ENCODE measurements at regions of chr7 and their contacts with region 1.

Region 1: GRCh38 chr7:101507791-101508252 is 121.3 kb downstream of the MYL10 start:
- DNase-seq: peak; percentile 70 to 84
- ATAC-seq: peak; percentile 76 to 84; a peak in 5 of 6 replicates
- H3K4me3 ChIP-seq: no peak overlapping the region
- H3K27ac ChIP-seq: no peak overlapping the region
- H3K4me1 ChIP-seq: no peaks in the 10 kb centered on the region
- CTCF ChIP-seq: peak; percentile 99
- EP300 ChIP-seq: no peak
- POLR2A ChIP-seq: no peak
- RAD21 ChIP-seq: peak; percentile 90 to 95

Region 2: DNA sequence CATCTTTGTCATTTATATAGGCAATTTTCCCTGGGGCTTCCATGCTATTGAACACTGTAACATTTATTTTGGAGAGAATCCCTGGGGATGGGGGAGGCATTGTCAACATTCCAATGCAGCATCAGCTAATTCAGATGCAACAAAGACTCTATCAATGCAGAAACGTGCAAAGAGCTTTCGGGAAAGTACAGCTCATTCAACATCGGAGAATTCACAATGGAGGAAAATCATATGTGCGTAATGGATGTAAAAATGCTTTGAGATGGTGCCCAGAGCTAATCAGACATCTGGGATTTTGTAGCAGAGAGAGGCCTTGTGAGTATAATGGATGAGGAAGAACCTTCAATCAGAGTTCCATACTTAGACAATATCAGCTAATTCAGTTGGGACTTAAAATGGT is 234.6 kb before region 1 on chr7:
- CTCF ChIA-PET with region 1: no interaction called
- POLR2A ChIA-PET with region 1: no interaction called
- DNase-seq: no peak
- ATAC-seq: no peak
- H3K4me3 ChIP-seq: no peak overlapping the region
- H3K27ac ChIP-seq: no peak overlapping the region
- H3K4me1 ChIP-seq: no peaks in the 10 kb centered on the region
- CTCF ChIP-seq: no peak
- EP300 ChIP-seq: no peak
- POLR2A ChIP-seq: no peak
- RAD21 ChIP-seq: no peak

Region 3: DNA sequence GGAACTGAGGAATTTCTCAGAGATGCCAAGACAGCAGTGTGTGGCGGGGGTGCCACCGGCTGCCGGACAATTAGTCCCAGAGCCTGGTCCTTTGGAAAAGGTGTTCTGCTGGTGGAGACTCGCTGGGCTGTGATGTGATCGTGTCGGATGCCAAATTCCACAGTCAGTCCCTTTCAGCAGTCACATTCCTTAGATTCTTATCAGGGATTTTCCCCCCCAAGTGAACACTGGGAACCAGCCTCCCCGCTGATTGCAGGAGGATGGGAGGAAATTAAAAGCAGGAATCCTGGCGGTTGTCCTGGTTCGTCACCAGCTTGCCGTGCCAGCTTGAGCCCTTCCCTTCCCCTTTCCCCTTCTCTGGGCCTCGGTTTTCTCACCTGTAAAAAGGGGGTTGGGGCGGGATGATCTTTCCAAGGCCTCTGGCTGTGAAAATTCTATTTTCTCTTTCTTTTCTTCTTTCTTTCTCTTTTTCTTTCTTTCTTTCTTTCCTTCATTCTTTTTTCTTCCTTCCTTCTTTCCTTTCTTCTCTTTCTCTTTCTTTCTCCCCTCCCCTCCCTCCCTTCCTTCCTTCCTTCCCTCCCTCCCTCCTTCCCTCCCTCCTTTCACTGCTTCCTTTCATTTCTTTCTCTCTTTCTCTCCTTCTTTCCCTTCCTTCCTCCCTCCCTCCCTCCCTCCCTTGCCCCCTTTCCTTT is 105.6 kb before region 1 on chr7:
- CTCF ChIA-PET with region 1: interaction called, 12 read pairs
- POLR2A ChIA-PET with region 1: no interaction called
- DNase-seq: peak; percentile 71 to 72
- ATAC-seq: peak; percentile 71 to 79
- H3K4me3 ChIP-seq: peak overlapping the region; percentile 5; the same call in 1 of the 3 replicates
- H3K27ac ChIP-seq: peak overlapping the region; percentile 48 to 67; a peak in 4 of 6 replicates
- H3K4me1 ChIP-seq: peaks cover 18% of the 10 kb centered on the region
- CTCF ChIP-seq: no peak
- EP300 ChIP-seq: no peak
- POLR2A ChIP-seq: no peak
- RAD21 ChIP-seq: no peak

Region 4: GRCh38 chr7:101494602-101495329 is 13.1 kb before region 1 on chr7:
- CTCF ChIA-PET with region 1: interaction called, 36 read pairs
- POLR2A ChIA-PET with region 1: no interaction called
- DNase-seq: no peak
- ATAC-seq: peak in 1 of 2 experiments; percentile 30; a peak in 2 of 6 replicates
- H3K4me3 ChIP-seq: no peak overlapping the region
- H3K27ac ChIP-seq: no peak overlapping the region
- H3K4me1 ChIP-seq: no peaks in the 10 kb centered on the region
- CTCF ChIP-seq: no peak
- EP300 ChIP-seq: no peak
- POLR2A ChIP-seq: no peak
- RAD21 ChIP-seq: no peak

Region 5: DNA sequence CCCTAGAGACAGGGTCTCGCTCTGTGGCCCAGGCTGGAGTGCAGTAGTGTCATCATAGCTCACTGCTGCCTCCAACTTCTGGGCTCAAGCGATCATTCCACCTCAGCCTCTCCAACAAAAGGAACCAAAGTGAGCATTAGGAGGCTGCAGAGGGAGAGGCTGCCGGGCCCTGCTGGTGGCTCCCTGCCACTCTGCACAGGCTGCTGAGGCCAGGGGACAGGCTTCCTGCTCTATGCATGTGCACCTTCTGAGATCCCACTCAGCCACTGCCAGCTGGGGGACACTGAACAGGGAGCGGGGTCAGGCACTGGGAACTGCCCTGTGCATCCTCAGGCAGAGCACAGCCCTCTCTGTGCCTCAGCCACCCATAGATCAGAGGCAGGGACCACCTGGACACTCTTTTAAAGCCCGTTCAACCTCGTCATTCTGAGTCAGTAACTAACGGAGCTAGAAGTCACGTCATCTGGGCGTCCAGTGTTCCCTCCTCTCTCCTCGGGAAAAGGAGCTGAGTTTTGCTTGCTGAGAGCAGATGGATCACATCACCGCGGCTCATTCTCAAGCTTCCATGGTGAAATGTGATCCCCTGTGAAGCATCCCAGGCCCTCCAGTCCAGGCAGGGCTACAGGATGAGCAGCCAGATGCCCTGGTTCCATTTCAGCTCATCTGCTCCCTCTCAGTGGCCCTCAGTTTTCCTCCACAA is 11.7 kb after region 1 on chr7:
- CTCF ChIA-PET with region 1: interaction called, 45 read pairs
- POLR2A ChIA-PET with region 1: no interaction called
- DNase-seq: no peak
- ATAC-seq: peak in 1 of 2 experiments; percentile 56; a peak in 4 of 6 replicates
- H3K4me3 ChIP-seq: no peak overlapping the region
- H3K27ac ChIP-seq: no peak overlapping the region
- H3K4me1 ChIP-seq: no peaks in the 10 kb centered on the region
- CTCF ChIP-seq: no peak
- EP300 ChIP-seq: no peak
- POLR2A ChIP-seq: no peak
- RAD21 ChIP-seq: no peak

Measured in A549 (cell line).